ENCODE measurements at regions of chr1 and their contacts with region 1.

Region 1: GRCh38 chr1:20521960-20522861 is 14.3 kb upstream of the MUL1 start:
- DNase-seq: peak in 2 of 3 donors; percentile 56 to 92
- ATAC-seq: peak; percentile 90
- H3K4me3 ChIP-seq: no peak overlapping the region
- H3K4me1 ChIP-seq: no peaks in the 10 kb centered on the region
- CTCF ChIP-seq: peak; percentile 69

Region 2: DNA sequence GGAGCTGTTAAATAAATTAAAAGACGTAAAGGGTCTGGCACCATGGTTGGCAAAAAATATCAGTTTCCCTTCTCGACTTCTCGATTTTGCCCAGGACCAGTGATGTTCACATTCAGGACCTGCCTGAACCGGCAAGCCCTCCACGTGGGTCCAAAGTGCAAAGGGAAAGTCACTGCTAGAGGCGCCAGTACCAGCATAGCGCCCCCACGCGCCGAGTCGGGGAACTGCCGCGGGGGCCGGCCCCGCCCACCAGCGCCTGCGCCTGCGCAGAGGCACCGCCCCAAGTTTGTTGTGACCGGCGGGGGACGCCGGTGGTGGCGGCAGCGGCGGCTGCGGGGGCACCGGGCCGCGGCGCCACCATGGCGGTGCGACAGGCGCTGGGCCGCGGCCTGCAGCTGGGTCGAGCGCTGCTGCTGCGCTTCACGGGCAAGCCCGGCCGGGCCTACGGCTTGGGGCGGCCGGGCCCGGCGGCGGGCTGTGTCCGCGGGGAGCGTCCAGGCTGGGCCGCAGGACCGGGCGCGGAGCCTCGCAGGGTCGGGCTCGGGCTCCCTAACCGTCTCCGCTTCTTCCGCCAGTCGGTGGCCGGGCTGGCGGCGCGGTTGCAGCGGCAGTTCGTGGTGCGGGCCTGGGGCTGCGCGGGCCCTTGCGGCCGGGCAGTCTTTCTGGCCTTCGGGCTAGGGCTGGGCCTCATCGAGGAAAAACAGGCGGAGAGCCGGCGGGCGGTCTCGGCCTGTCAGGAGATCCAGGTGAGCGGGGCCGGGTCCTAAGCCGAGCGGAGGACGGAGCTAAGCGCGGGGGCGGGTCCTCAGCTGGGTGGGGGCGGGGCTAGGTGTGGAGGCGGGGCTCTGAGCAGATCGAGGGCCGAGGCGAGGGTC is 111.2 kb after region 1 on chr1 and contains the start of gene PINK1:
- intact Hi-C with region 1: loop called in 1 of 2 experiments (anchors 5 kb)
- DNase-seq: peak; percentile 87 to 97 (median 90)
- ATAC-seq: peak; percentile 94
- H3K4me3 ChIP-seq: peak within 1 kb of the TSS; percentile 97
- H3K4me1 ChIP-seq: peaks cover 14% of the 10 kb centered on the region
- CTCF ChIP-seq: peak; percentile 100
- total RNA-seq, gene PINK1: 75.4 to 141 (median 111) TPM

Region 3: DNA sequence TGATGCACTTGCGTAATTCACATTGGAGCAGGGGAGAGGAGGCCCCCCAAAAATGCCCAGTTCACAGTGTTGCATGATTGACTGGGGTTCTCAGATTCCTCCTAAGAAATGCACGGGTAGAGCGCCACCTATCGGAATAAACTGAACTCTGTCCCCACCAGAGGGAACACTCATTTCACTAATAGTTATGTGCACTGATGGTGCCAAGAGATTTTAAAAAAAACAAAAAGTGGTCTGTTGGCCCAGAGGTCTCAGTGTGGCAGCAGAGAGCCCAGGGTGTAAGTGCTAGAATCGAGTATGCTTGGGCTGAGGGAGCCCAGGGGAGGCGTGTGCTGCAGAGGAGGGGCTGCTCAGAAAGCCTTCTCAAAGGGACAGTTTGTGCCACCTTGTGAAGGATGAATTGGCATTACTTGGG is 118.0 kb after region 1 on chr1:
- intact Hi-C with region 1: loop called in 1 of 2 experiments (anchors 10 kb)
- DNase-seq: peak in 1 of 3 donors; percentile 79
- ATAC-seq: peak; percentile 77
- H3K4me3 ChIP-seq: no peak overlapping the region
- H3K4me1 ChIP-seq: no peaks in the 10 kb centered on the region
- CTCF ChIP-seq: peak; percentile 29